H1 (cell line): ENCODE measurements at regions of chr12 and their contacts with region 1.

Region 1: DNA sequence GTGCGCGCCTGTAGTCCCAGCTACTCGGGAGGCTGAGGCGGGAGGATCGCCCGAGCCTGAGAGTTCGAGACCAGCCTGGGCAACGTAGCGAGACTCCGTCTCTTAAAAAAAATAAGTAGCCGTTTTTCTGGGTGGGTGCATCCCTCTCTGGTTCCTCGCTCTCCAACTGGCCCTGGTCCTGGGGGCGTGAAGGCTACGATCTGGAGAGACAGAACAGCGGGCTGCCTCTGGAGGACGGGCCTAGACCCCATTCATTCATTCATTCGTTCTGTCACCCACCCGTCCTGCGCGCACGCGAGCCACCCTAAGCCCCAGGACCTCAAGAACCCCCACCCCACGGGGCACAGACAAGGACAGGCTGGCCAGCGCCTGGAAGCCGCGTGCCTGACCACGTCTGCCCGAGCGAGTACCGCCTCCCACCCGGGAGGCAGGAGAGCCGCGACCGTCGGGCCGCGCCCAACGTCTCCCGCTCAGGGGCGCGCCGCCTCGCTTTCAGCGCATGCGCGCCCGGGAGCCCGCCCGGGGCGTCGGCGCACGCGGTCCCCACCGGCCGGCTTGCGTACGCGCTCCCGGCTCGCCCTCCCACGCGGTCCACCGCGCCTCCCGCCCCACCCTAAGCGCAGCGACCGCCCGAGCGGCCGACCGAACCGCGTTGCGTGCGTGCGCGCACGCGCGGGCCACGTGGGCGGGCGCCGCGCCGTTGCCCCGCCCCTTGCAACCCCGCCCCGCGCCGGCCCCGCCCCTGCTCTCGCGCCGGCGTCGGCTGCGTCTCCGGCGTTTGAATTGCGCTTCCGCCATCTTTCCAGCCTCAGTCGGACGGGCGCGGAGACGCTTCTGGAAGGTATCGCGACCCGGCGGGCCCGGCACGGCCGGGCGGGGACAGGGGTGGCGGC is at the start of gene RAN:
- DNase-seq: peak; percentile 71 to 87
- H3K4me3 ChIP-seq: peak within 1 kb of the TSS; percentile 84 to 98 (median 90)
- H3K27ac ChIP-seq: peak within 1 kb of the TSS; percentile 95
- H3K4me1 ChIP-seq: peaks cover 0 to 3% (median 3%) of the 10 kb centered on the region in 4 experiments; a peak in 4 of 7 replicates
- H3K27me3 ChIP-seq: no peaks in the 10 kb centered on the region
- CTCF ChIP-seq: no peak
- EP300 ChIP-seq: no peak
- POLR2A ChIP-seq: peak; percentile 69 to 90
- RAD21 ChIP-seq: no peak
- total RNA-seq, gene RAN: 2,056 and 2,064 TPM in 2 replicates

Region 2: DNA sequence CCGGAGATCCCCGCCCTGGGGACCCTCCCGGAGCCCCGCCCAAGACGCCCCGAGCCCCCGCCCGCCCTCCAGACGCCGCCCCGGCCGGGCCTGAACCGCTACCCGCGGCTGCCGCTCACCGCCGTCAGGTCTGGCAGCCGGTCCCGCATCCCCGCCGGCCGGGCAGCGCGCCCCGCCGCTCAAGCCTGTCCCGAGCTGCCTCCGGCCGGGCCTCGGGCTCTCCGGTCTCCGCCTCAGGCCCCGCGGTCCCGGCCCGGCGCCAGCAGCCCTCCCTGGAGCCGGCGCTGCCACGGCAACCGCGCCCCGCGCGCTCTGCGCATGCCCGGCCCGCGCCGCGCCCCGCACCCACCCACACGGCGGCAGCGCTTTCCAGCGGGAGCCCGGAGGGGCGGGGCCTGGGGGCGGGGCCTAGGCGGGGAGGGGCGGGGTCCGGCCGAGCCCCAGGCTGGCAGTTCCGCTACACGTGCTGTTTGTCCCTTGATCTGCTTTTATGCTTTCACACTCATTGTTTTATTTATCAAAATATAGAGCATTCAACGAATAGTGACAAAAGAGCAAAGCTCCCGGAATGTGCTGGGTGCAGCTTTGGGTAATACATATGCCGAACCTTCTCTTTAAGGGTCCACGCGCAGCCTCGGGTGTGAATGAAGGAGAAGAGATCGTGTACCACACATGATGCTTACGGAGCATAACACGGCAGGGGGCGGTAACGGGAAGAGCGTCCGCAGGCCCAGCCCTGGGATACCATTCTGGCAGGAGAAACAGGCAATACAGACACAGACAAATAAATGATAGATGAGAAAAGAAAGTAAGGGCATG is 32.4 kb before region 1 on chr12 and contains the start of gene STX2:
- CTCF ChIA-PET with region 1: interaction called, 4 read pairs
- POLR2A ChIA-PET with region 1: interaction called, 29 read pairs
- DNase-seq: peak in 1 of 2 experiments; percentile 90
- H3K4me3 ChIP-seq: peak within 1 kb of the TSS; percentile 58 to 78 (median 63)
- H3K27ac ChIP-seq: no peak within 1 kb of the TSS
- H3K4me1 ChIP-seq: peaks cover 6 to 14% (median 9%) of the 10 kb centered on the region in 4 experiments; a peak in 6 of 7 replicates
- H3K27me3 ChIP-seq: peaks cover 0 to 15% (median 7%) of the 10 kb centered on the region in 4 experiments; a peak in 5 of 7 replicates
- CTCF ChIP-seq: peak in 2 of 3 experiments; percentile 11 to 25; a peak in 2 of 4 replicates
- EP300 ChIP-seq: no peak
- POLR2A ChIP-seq: no peak
- RAD21 ChIP-seq: 0 out of 4 replicates have a peak, but pooled peaks of 1 of the 2 experiments have one; percentile 3
- total RNA-seq, gene STX2: 22.0 and 26.3 TPM in 2 replicates

Region 3: GRCh38 chr12:130849561-130850417 is 21.7 kb before region 1 on chr12:
- CTCF ChIA-PET with region 1: interaction called, 8 read pairs
- POLR2A ChIA-PET with region 1: interaction called, 86 read pairs
- DNase-seq: no peak
- H3K4me3 ChIP-seq: peak overlapping the region in 1 of 4 experiments; percentile 18; a peak in 2 of 8 replicates
- H3K27ac ChIP-seq: peak overlapping the region; percentile 44
- H3K4me1 ChIP-seq: peaks cover 9 to 13% (median 10%) of the 10 kb centered on the region in 4 experiments; a peak in 6 of 7 replicates
- H3K27me3 ChIP-seq: no peaks in the 10 kb centered on the region
- CTCF ChIP-seq: no peak
- EP300 ChIP-seq: peak in 1 of 2 experiments; percentile 22; a peak in 1 of 3 replicates
- POLR2A ChIP-seq: no peak
- RAD21 ChIP-seq: no peak

Region 4: DNA sequence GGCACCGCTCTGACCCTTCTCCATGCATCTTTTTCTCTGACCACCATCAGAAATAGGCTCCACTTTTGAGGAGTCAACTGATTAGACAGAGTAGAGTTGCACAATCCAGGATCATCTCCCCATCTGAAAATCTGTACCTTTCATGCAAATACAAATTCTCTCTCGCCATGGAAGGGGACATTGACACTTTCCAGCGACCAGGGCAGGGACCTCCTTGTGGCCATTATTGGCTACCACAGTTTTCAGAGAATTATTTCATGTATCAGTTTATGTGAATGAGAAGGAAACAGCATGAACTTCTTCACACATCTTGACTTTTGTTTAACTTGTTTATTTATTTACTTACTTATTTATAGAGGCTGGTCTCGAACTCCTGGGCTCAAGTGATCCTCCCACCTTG is 13.4 kb before region 1 on chr12:
- CTCF ChIA-PET with region 1: interaction called, 26 read pairs
- POLR2A ChIA-PET with region 1: interaction called, 86 read pairs
- DNase-seq: no peak
- H3K4me3 ChIP-seq: no peak overlapping the region
- H3K27ac ChIP-seq: 0 out of 2 replicates have a peak overlapping the region, but pooled peaks have one; percentile 32
- H3K4me1 ChIP-seq: peaks cover 4 to 7% (median 6%) of the 10 kb centered on the region in 4 experiments; a peak in 5 of 7 replicates
- H3K27me3 ChIP-seq: no peaks in the 10 kb centered on the region
- CTCF ChIP-seq: peak; percentile 12 to 52 (median 38); a peak in 3 of 4 replicates
- EP300 ChIP-seq: no peak
- POLR2A ChIP-seq: no peak
- RAD21 ChIP-seq: peak; percentile 27 to 45

Region 5: GRCh38 chr12:131035268-131035681 is 163.7 kb after region 1 on chr12:
- CTCF ChIA-PET with region 1: no interaction called
- POLR2A ChIA-PET with region 1: no interaction called
- DNase-seq: no peak
- H3K4me3 ChIP-seq: no peak overlapping the region
- H3K27ac ChIP-seq: no peak overlapping the region
- H3K4me1 ChIP-seq: no peaks in the 10 kb centered on the region
- H3K27me3 ChIP-seq: no peaks in the 10 kb centered on the region
- CTCF ChIP-seq: no peak
- EP300 ChIP-seq: no peak
- POLR2A ChIP-seq: no peak
- RAD21 ChIP-seq: no peak